ENCODE measurements at regions of chr1 and their contacts with region 1.

Region 1: GRCh38 chr1:171141688-171142415 is 43.2 kb upstream of the FMO2 start:
- DNase-seq: no peak
- ATAC-seq: peak; percentile 87
- H3K4me3 ChIP-seq: no peak overlapping the region
- H3K27ac ChIP-seq: peak overlapping the region; percentile 71
- H3K4me1 ChIP-seq: peaks cover 23% of the 10 kb centered on the region
- H3K27me3 ChIP-seq: no peaks in the 10 kb centered on the region
- CTCF ChIP-seq: peak; percentile 32

Region 2: GRCh38 chr1:171180670-171181069 is 38.8 kb after region 1 on chr1:
- intact Hi-C with region 1: loop called (anchors 5 kb)
- DNase-seq: no peak
- ATAC-seq: no peak
- H3K4me3 ChIP-seq: no peak overlapping the region
- H3K27ac ChIP-seq: no peak overlapping the region
- H3K4me1 ChIP-seq: no peaks in the 10 kb centered on the region
- H3K27me3 ChIP-seq: no peaks in the 10 kb centered on the region
- CTCF ChIP-seq: no peak

Measured in upper lobe of right lung (tissue), 1 donor.